BJ (cell line): ENCODE measurements at regions of chr3 and their contacts with region 1.

Region 1: GRCh38 chr3:115324056-115324455 is 177.0 kb upstream of the ZBTB20 start:
- DNase-seq: no peak
- H3K4me3 ChIP-seq: no peak overlapping the region
- H3K27me3 ChIP-seq: no peaks in the 10 kb centered on the region
- CTCF ChIP-seq: no peak

Region 2: DNA sequence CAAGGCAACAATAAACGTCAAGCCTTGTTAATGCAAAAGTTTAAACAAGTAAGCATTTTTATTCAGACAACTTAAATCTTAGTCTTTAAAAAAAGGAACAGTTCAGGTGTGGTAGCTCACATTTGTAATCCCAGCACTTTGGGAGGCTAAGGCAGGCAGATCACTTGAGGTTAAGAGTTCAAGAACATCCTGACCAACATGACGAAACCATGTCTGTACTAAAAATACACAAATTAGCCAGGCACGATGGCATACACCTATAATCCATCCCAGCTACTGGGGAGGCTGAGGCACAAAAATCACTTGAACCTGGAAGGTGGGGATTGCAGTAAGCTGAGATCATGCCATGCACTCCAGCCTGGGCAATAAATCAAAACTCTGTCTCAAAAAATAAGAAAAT is 196.8 kb before region 1 on chr3:
- CTCF ChIA-PET with region 1: no interaction called
- POLR2A ChIA-PET with region 1: no interaction called
- DNase-seq: no peak
- H3K4me3 ChIP-seq: no peak overlapping the region
- H3K27me3 ChIP-seq: no peaks in the 10 kb centered on the region
- CTCF ChIP-seq: no peak

Region 3: GRCh38 chr3:115523458-115523857 is 199.4 kb after region 1 on chr3:
- CTCF ChIA-PET with region 1: no interaction called
- POLR2A ChIA-PET with region 1: interaction called, 15 read pairs
- DNase-seq: no peak
- H3K4me3 ChIP-seq: no peak overlapping the region
- H3K27me3 ChIP-seq: no peaks in the 10 kb centered on the region
- CTCF ChIP-seq: no peak